ENCODE measurements at regions of chr7 and their contacts with region 1.

Region 1: DNA sequence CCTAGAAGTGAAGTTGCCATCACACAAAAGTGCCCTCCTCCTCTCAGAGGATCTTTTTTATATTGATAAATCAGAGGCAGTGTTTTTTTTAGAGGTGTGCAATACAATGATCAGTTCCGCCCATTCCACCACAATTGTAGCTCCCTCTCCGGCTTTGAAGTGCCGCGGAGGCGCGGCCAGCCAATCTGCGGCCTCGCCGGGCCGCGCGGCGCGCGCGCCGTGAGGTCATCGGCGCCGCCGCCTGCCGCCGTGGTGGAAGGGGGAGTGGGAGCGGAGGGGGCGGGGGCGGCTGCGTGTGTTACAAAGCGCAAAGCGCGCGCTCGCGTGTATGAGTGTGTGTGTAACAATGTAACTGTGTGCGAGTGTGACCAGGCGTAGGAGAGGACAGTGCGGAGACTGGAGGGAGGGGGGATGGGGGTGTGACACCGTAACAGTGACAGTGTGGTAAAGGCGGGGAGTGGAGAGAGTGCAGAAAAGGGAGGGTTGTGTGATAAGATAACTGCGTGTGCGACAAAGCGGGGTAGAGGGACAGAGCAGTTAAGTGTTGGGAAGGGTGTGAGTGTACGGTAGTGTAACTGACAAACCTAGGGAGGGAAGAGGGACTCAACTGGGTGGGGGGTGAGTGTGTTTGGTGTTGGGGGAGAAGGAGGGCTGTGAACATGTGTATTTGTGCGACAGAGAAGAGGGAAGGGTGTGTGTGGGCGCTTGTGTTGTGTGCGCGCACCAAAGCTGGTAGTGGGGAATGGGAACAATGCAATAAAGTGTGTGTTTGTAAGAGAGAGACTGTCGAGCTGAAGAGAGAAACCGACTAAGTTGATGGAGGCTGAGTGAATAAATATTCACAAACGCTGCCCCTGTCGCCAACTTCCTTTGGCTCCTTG is at the start of gene SP8:
- DNase-seq: peak; percentile 86 to 90
- H3K4me3 ChIP-seq: peak within 1 kb of the TSS; percentile 84
- H3K4me3 Mint-ChIP-seq: peak within 1 kb of the TSS; percentile 92
- H3K27ac Mint-ChIP-seq: peak within 1 kb of the TSS; percentile 66
- H3K4me1 ChIP-seq: peaks cover 10% of the 10 kb centered on the region
- H3K4me1 Mint-ChIP-seq: peaks cover 29% of the 10 kb centered on the region
- H3K27me3 ChIP-seq: no peaks in the 10 kb centered on the region; the same call in 1 of the 2 replicates
- H3K27me3 Mint-ChIP-seq: peaks cover 6% of the 10 kb centered on the region
- CTCF ChIP-seq: no peak
- total RNA-seq, gene SP8: 13.2 and 13.3 TPM in 2 replicates

Region 2: DNA sequence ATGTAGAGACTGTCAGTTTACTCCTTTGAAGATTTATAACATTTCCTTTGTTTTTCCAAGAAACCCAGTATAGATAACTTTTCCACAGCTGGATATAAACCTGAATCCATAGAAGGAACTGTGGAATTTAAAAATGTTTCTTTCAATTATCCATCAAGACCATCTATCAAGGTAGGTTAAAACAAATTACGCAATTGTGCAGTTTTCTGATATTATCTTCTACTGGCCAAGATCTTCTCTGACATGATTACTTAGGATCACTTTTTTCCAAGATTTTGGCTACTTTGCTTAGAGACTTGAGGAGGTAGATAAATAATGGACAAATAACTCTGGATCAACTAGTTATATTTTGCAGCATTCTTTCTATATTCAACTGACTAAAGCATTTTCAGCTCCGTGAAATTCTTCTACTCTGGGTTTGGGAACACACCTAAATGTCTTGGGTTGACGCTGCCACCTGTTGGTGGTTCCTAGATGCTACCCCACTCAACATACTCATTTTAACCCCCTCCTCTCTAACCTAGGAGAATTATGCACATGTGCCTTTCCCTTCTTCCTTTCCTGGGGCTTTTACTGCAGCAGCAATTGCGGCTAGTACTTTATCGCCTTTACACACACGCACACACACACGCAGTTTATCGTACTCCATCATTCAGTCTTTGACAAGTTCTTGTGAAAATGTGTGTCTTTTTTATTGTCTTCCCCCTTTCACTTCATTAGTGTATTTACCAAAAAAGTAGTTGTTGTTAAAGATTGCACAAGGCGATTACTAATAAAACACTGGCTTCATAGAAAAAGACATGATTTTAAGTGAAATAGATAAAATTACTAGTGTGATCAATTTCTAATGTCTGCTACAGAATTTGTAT is 138.9 kb before region 1 on chr7:
- CTCF ChIA-PET with region 1: interaction called, 3 read pairs
- POLR2A ChIA-PET with region 1: no interaction called
- intact Hi-C with region 1: loop called (anchors 5 kb)
- DNase-seq: peak; percentile 62 to 64
- H3K4me3 ChIP-seq: no peak overlapping the region
- H3K4me3 Mint-ChIP-seq: no peak overlapping the region
- H3K27ac Mint-ChIP-seq: no peak overlapping the region
- H3K4me1 ChIP-seq: no peaks in the 10 kb centered on the region
- H3K4me1 Mint-ChIP-seq: peaks cover 7% of the 10 kb centered on the region
- H3K27me3 ChIP-seq: no peaks in the 10 kb centered on the region
- H3K27me3 Mint-ChIP-seq: no peaks in the 10 kb centered on the region
- CTCF ChIP-seq: peak; percentile 60 to 67

Region 3: DNA sequence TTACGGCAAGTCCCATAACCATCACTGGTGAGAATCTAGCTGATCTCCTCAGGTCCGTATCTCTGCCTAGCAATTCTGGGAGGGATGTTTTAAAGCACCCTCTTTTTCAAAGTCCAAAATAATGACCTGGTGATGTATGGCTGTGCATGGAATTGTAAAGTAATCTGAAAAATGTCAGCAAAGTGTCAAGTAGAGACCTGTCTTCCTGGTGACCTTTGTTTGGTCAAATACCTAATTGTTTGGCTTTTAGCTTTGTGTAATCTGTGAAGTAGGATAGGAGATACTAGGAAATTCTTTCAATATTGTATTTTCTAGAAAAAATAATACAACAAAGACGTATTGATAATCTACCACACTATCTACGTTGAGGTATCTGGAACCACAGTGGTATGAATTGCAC is 120.6 kb before region 1 on chr7:
- CTCF ChIA-PET with region 1: interaction called, 6 read pairs
- POLR2A ChIA-PET with region 1: no interaction called
- intact Hi-C with region 1: loop called (anchors 1 kb)
- DNase-seq: peak in 1 of 2 experiments; percentile 30
- H3K4me3 ChIP-seq: no peak overlapping the region
- H3K4me3 Mint-ChIP-seq: peak overlapping the region; percentile 12
- H3K27ac Mint-ChIP-seq: peak overlapping the region; percentile 51
- H3K4me1 ChIP-seq: peaks cover 13% of the 10 kb centered on the region
- H3K4me1 Mint-ChIP-seq: peaks cover 18% of the 10 kb centered on the region
- H3K27me3 ChIP-seq: no peaks in the 10 kb centered on the region
- H3K27me3 Mint-ChIP-seq: no peaks in the 10 kb centered on the region
- CTCF ChIP-seq: no peak

Region 4: GRCh38 chr7:20684581-20684980 is 102.4 kb before region 1 on chr7:
- CTCF ChIA-PET with region 1: no interaction called
- POLR2A ChIA-PET with region 1: no interaction called
- intact Hi-C with region 1: no loop called
- DNase-seq: no peak
- H3K4me3 ChIP-seq: no peak overlapping the region
- H3K4me3 Mint-ChIP-seq: no peak overlapping the region
- H3K27ac Mint-ChIP-seq: no peak overlapping the region
- H3K4me1 ChIP-seq: peaks cover 9% of the 10 kb centered on the region; the same call in 1 of the 2 replicates
- H3K4me1 Mint-ChIP-seq: peaks cover 7% of the 10 kb centered on the region
- H3K27me3 ChIP-seq: no peaks in the 10 kb centered on the region
- H3K27me3 Mint-ChIP-seq: no peaks in the 10 kb centered on the region
- CTCF ChIP-seq: no peak

Region 5: DNA sequence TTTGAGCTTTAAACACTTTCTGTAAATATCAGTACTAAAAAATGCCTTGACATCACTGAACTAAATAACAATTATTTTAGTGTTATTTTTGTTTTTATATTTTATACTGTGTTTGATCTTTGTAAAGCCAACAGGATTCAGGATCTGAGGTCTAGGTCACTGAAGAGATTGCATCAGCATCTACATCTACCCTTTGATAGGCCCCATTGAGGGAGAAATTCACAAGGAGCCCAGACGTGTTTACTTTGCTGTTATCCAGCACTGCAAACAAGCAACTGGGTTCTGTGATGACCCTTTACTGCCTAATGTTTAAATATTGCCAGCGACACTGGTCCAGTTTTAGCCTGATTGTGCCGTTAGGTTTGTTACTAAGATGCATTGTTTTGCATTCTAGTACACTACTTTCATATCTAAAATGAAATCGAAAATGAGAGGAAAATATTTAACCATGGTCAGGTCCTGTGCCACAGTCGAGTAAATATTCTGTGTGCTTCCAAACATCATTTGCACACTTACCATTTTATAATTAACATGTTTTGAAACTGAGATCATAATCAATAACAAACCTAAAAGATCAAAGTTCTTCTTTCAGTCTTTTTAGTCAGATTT is 49.1 kb before region 1 on chr7:
- CTCF ChIA-PET with region 1: interaction called, 9 read pairs
- POLR2A ChIA-PET with region 1: interaction called, 5 read pairs
- intact Hi-C with region 1: loop called (anchors 1 kb)
- DNase-seq: peak; percentile 63 to 78
- H3K4me3 ChIP-seq: no peak overlapping the region
- H3K4me3 Mint-ChIP-seq: peak overlapping the region; percentile 79
- H3K27ac Mint-ChIP-seq: peak overlapping the region; percentile 90
- H3K4me1 ChIP-seq: peaks cover 65% of the 10 kb centered on the region
- H3K4me1 Mint-ChIP-seq: peaks cover 53% of the 10 kb centered on the region
- H3K27me3 ChIP-seq: no peaks in the 10 kb centered on the region
- H3K27me3 Mint-ChIP-seq: no peaks in the 10 kb centered on the region
- CTCF ChIP-seq: no peak

Region 6: DNA sequence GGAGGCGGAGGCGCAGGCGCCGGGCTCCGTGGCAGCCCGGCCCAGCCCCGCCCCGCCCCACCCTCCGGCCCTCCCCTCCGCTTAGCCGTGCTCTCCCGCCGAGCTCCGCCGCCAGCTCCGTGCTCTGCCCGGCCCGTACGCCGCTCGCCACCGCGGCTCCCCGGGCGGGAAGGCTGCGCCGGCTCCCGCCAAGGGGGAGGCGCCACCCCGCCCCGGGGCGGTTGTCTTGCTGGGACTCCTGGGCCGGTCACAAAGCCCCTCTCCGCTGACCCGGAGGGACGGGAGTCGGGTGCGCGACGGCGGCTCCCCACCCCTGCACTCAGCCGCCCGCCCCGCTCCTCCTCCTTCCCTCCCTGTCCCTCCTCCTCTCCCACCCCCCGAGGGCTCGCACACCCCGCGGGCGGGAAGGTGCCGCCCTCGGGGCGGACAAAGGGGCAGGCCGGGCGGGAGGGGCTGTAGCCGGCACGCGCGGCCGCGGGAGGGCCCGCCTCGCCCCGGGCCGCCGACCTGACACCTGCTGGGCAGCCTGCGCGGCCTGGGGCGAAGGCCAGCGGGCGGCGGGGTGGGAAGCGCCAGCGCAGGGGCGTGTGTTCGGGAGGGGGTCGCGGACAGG is 11.2 kb after region 1 on chr7:
- CTCF ChIA-PET with region 1: interaction called, 7 read pairs
- POLR2A ChIA-PET with region 1: interaction called, 17 read pairs
- intact Hi-C with region 1: loop called (anchors 1 kb)
- DNase-seq: peak; percentile 89 to 90
- H3K4me3 ChIP-seq: peak overlapping the region; percentile 50
- H3K4me3 Mint-ChIP-seq: peak overlapping the region; percentile 98
- H3K27ac Mint-ChIP-seq: peak overlapping the region; percentile 82
- H3K4me1 ChIP-seq: no peaks in the 10 kb centered on the region; the same call in 1 of the 2 replicates
- H3K4me1 Mint-ChIP-seq: no peaks in the 10 kb centered on the region
- H3K27me3 ChIP-seq: no peaks in the 10 kb centered on the region
- H3K27me3 Mint-ChIP-seq: no peaks in the 10 kb centered on the region
- CTCF ChIP-seq: no peak

Region 7: GRCh38 chr7:20834656-20835055 is 47.6 kb after region 1 on chr7:
- CTCF ChIA-PET with region 1: interaction called, 3 read pairs
- POLR2A ChIA-PET with region 1: interaction called, 3 read pairs
- intact Hi-C with region 1: loop called (anchors 1 kb)
- DNase-seq: peak in 1 of 2 experiments; percentile 19
- H3K4me3 ChIP-seq: peak overlapping the region; percentile 29; the same call in 1 of the 2 replicates
- H3K4me3 Mint-ChIP-seq: peak overlapping the region; percentile 68
- H3K27ac Mint-ChIP-seq: no peak overlapping the region
- H3K4me1 ChIP-seq: no peaks in the 10 kb centered on the region
- H3K4me1 Mint-ChIP-seq: peaks cover 12% of the 10 kb centered on the region
- H3K27me3 ChIP-seq: no peaks in the 10 kb centered on the region
- H3K27me3 Mint-ChIP-seq: peaks cover 3% of the 10 kb centered on the region
- CTCF ChIP-seq: peak; percentile 50 to 60

Region 8: GRCh38 chr7:20945451-20945850 is 158.4 kb after region 1 on chr7:
- CTCF ChIA-PET with region 1: no interaction called
- POLR2A ChIA-PET with region 1: no interaction called
- intact Hi-C with region 1: no loop called
- DNase-seq: no peak
- H3K4me3 ChIP-seq: no peak overlapping the region
- H3K4me3 Mint-ChIP-seq: no peak overlapping the region
- H3K27ac Mint-ChIP-seq: no peak overlapping the region
- H3K4me1 ChIP-seq: no peaks in the 10 kb centered on the region
- H3K4me1 Mint-ChIP-seq: no peaks in the 10 kb centered on the region
- H3K27me3 ChIP-seq: no peaks in the 10 kb centered on the region
- H3K27me3 Mint-ChIP-seq: peaks cover 3% of the 10 kb centered on the region
- CTCF ChIP-seq: no peak

Measured in Caco-2 (cell line).